WTC11 (cell line): ENCODE measurements at regions of chr9 and their contacts with region 1.

Region 1: GRCh38 chr9:89597711-89598625 is 6.8 kb upstream of the GADD45G start:
- DNase-seq: peak; percentile 67
- ATAC-seq: peak; percentile 30
- H3K4me3 Mint-ChIP-seq: no peak overlapping the region
- H3K27ac Mint-ChIP-seq: no peak overlapping the region
- H3K4me1 Mint-ChIP-seq: peaks cover 14% of the 10 kb centered on the region
- H3K27me3 Mint-ChIP-seq: no peaks in the 10 kb centered on the region
- CTCF ChIP-seq: peak; percentile 56

Region 2: DNA sequence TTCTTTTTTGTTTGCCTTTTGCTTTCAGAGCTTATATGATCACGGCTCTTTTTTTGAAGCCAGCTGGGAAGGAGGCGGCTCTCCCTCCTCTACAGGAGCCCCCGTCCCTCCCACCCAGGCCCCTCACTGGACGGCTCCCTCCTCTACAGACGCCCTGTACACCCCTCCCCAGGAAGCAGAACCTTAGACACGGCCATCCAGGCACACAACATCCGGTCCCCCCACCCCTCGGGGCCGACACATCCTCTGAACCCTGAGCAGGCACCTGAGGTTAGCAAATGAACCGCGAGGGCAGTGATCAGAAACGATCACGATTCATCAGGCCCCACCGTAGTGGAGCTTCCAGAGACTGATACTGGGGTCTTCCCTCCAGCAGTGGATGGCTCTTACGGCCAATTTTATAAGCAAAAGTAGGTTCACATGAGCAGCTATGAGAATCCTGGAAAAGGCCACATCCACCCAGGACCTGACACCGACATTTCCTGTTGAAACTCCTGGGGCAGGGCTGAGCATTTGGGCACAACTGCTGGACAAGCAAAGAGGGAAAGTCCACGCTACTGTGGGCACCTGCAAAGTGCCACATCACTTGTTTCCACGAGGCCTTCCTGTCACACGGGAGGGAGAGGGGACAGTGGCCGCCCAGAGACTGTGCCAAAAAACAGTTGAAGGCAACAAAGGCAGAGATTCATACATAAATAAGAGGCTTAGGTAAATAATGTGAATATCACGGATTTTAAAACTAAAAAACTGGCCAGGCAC is 178.9 kb before region 1 on chr9:
- CTCF ChIA-PET with region 1: no interaction called
- POLR2A ChIA-PET with region 1: no interaction called
- DNase-seq: no peak
- ATAC-seq: no peak
- H3K4me3 Mint-ChIP-seq: no peak overlapping the region
- H3K27ac Mint-ChIP-seq: peak overlapping the region; percentile 61; the same call in 1 of the 2 replicates
- H3K4me1 Mint-ChIP-seq: peaks cover 9% of the 10 kb centered on the region; the same call in 1 of the 2 replicates
- H3K27me3 Mint-ChIP-seq: no peaks in the 10 kb centered on the region
- CTCF ChIP-seq: no peak

Region 3: DNA sequence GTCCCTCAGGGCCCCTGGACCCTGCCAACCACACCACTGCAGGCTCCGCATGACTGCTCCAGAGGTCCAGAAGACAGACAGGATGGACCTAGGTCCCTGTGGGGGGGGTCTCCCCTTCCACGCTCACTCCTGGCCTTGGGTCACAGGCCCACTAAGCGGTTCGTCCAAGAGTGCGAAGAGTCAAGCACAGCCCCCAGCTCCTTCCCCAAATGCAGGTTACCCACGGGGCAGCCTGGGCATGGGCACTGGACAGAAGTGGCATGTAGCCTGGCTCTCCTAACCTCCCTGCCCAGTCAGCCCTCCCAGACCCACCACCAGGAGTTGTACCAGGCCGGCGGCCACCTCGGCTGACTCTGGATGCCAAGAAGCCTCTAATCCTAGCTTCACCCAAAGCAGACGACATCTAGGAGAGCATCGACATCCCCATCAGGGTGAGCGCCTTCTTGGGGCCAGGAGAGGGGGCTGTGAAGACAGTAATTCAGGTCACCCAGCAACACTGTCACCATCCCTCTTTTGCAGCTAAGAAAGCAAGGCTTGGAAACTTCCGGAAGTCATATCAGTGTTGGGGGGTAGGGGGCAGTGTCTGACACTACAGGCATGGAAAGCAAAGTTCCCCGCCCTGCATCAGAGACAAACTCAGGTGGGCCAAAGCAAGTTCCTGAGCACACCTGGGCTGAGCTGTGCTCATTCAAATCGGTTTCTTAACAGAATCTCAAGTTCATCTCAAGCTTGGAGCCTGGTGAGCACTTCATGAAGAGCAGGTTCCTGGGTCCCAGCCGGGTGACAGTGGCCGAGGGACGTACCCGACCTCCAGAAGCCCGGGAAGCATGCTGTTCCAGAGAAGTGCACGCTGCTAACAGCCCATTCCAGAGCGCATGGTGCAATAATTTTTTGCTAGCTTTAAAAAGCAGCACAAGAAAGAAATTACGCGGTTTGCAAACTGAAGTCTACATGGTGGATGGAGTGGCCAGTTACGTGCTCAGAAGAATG is 168.8 kb before region 1 on chr9:
- CTCF ChIA-PET with region 1: interaction called, 40 read pairs
- POLR2A ChIA-PET with region 1: no interaction called
- DNase-seq: peak; percentile 75
- ATAC-seq: peak; percentile 86
- H3K4me3 Mint-ChIP-seq: 0 out of 2 replicates have a peak overlapping the region, but pooled peaks have one; percentile 14
- H3K27ac Mint-ChIP-seq: peak overlapping the region; percentile 92
- H3K4me1 Mint-ChIP-seq: peaks cover 58% of the 10 kb centered on the region
- H3K27me3 Mint-ChIP-seq: no peaks in the 10 kb centered on the region
- CTCF ChIP-seq: peak; percentile 42

Region 4: DNA sequence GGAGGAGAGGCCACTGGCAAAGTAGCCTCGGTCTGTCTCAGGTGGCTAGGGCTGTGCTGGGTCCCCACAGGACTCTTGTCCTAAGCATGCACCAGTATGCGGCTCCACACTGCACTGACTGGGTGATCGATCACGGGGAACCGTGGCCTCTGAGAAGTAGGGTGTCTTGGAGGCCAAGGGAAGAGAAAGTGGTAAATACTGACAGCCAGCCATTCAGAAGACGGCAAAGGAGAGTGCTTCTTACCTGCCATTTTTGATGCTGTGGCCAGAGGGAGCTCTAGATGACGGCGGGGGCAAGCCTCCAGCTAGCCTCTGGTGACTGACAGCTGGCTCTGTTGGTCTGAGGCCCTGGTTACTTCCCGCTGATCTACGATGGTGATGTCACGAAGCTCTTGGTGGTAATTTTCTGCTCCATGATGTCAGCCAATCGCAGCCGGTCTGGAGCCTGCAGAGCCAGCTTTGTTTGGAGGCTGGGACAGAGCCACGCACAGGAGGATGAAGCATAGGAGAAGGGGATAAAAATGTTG is 33.6 kb before region 1 on chr9:
- CTCF ChIA-PET with region 1: interaction called, 36 read pairs
- POLR2A ChIA-PET with region 1: no interaction called
- DNase-seq: peak; percentile 63
- ATAC-seq: peak; percentile 98
- H3K4me3 Mint-ChIP-seq: no peak overlapping the region
- H3K27ac Mint-ChIP-seq: peak overlapping the region; percentile 46; the same call in 1 of the 2 replicates
- H3K4me1 Mint-ChIP-seq: peaks cover 14% of the 10 kb centered on the region
- H3K27me3 Mint-ChIP-seq: no peaks in the 10 kb centered on the region
- CTCF ChIP-seq: peak; percentile 29; the same call in 1 of the 2 replicates

Region 5: DNA sequence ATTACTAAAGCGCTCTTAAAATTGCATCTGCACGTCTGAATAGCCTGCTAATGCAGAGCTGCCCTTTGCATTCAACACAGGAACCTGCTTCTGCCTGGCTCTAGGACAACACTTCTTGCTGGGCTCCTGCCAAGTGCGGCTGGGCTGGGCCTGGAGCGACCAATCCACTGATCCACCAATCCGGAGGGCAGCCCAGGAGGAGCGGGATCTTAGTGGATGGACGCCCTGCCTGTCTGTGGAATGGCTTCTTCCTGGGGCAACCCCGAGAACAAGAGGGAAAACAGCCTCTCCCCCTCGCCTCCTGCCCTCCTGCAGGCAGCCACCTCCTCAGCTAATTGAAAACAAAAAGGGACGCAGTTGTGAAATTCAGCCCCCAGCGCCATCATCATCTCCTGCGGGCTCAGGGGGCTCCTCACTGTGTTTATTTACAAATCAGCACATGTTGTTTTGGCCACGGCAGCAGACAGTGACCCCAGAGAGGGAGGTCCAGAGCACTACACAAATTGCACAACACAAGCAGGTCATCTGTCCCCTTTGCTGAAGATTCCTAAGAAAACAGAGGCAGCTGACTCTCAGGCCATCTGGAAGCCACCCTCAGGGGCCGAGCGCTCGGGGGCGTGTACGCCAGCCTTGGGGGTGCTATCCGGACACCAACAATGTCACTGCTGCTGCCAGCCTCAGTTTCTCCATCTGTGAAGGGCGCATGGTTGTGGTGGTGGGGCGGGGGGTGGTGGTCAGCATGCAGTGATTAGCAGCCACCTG is 64.2 kb after region 1 on chr9:
- CTCF ChIA-PET with region 1: interaction called, 15 read pairs
- POLR2A ChIA-PET with region 1: no interaction called
- DNase-seq: peak; percentile 92
- ATAC-seq: peak; percentile 98
- H3K4me3 Mint-ChIP-seq: peak overlapping the region; percentile 25
- H3K27ac Mint-ChIP-seq: peak overlapping the region; percentile 94
- H3K4me1 Mint-ChIP-seq: peaks cover 60% of the 10 kb centered on the region
- H3K27me3 Mint-ChIP-seq: peaks cover 3% of the 10 kb centered on the region; the same call in 1 of the 2 replicates
- CTCF ChIP-seq: no peak

Region 6: DNA sequence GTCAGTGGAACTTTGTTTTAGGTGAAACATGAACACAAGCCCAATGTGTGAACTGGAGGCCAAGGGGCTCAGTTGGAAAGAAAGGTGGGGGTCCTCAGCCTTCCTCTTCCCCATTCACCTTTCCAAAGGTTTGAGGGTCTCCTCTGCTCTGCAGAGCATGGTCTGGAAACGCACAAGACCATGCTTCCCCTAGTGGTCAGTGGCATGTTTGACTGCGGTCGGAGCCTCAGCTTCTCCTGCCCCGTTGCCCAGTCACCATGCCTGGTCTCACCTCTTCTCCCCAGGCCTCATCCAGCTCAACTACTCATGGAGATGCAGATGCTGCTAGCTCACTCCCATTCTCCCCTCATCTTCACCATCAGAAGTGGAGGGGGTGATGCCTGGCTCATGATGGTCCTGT is 347.2 kb after region 1 on chr9:
- CTCF ChIA-PET with region 1: interaction called, 25 read pairs
- POLR2A ChIA-PET with region 1: no interaction called
- DNase-seq: peak; percentile 50
- ATAC-seq: peak; percentile 92
- H3K4me3 Mint-ChIP-seq: no peak overlapping the region
- H3K27ac Mint-ChIP-seq: no peak overlapping the region
- H3K4me1 Mint-ChIP-seq: peaks cover 9% of the 10 kb centered on the region
- H3K27me3 Mint-ChIP-seq: no peaks in the 10 kb centered on the region
- CTCF ChIP-seq: peak; percentile 52; the same call in 1 of the 2 replicates

Region 7: GRCh38 chr9:90095682-90096081 is 497.7 kb after region 1 on chr9:
- CTCF ChIA-PET with region 1: interaction called, 157 read pairs
- POLR2A ChIA-PET with region 1: interaction called, 3 read pairs
- DNase-seq: no peak
- ATAC-seq: no peak
- H3K4me3 Mint-ChIP-seq: no peak overlapping the region
- H3K27ac Mint-ChIP-seq: no peak overlapping the region
- H3K4me1 Mint-ChIP-seq: no peaks in the 10 kb centered on the region
- H3K27me3 Mint-ChIP-seq: no peaks in the 10 kb centered on the region
- CTCF ChIP-seq: no peak